Posterior cingulate gyrus (tissue), 11 donors: ENCODE measurements at regions of chr15 and their contacts with region 1.

Region 1: DNA sequence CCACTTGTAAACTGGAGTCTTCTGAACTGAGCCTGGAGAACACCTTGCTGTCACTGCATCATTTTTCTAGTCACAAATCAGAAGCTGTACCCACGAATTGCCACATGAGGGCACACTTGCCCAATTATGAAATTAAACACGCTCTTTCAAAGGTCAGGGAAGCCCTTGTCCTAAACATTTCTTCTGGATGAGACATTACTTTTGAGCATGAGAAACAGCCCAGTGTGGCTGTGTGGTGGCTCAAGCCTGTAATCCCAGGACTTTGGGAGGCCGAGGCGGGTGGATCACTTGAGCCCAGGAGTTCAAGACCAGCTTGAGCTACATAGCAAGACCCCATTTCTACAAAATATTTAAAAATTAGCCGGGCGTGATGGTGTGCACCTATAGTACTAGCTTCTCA is 27.5 kb upstream of the CFAP161 start:
- DNase-seq: peak in 4 of 10 donors; percentile 43 to 56 (median 50)

Region 2: GRCh38 chr15:80977627-80978036 is 128.9 kb before region 1 on chr15:
- intact Hi-C with region 1: loop called (anchors 5 kb)
- DNase-seq: peak in 8 of 10 donors; percentile 26 to 95 (median 72)

Region 3: GRCh38 chr15:80996247-80996646 is 110.3 kb before region 1 on chr15:
- intact Hi-C with region 1: loop called (anchors 5 kb)
- DNase-seq: no peak

Region 4: DNA sequence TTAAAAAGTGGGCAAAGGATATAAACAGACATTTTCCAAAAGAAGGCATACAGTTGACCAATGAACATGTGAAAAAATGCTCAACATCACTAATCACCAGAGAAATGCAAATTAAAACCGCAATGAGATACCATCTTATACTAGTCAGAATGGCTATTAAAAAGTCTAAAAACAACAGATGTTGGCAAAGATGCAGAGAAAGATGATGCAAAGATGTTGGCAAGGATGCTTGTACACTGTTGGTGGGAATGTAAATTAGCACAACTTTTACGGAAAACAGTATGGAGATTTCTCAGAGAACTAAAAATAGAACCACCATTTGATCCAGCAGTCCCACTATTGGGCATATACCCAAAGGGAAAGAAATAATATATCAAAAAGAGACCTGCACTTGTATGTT is 52.3 kb before region 1 on chr15:
- intact Hi-C with region 1: no loop called
- DNase-seq: no peak

Region 5: GRCh38 chr15:81146006-81146405 is 39.4 kb after region 1 on chr15:
- intact Hi-C with region 1: loop called (anchors 5 kb)
- DNase-seq: no peak

Region 6: DNA sequence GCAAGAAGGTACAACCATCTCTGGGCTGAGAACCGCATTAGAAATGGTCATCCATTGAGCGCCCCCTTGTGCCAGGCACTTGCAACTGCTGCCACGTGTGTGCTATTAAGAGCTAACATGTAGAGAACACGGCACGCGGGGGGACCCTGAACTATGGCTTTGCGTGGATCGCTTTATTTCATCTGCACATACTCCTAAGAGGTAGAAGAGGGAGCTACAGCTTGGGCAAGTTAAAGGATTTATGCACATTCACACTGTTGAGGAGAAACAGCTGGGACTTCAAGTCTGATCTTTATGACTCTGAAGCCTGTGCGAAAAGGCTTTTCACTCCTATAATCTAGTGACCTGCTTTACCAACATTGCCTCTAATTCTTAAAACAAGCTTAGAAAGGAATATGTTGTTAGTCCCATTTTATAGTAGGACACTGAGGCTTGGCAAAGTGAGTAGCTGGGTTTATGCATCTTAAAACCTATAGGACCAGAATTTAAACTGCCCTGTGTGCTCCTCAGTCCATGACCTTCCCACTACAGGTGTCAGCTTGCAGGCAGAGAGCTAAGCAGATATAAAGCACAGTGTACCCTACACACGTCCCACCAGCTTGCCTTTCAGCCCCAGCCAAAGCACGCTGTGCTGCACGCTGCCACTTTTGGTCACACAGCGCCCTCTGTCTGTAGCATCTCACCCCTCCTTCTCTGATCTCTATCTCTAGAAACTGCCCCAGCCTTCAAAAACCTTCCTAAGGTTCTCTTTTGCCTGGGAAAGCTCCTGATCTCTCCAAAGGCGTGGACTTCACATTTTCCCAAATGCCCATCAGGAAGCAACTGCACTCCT is 159.6 kb after region 1 on chr15:
- intact Hi-C with region 1: loop called (anchors 1 kb)
- DNase-seq: peak; percentile 59 to 96 (median 86)

Region 7: DNA sequence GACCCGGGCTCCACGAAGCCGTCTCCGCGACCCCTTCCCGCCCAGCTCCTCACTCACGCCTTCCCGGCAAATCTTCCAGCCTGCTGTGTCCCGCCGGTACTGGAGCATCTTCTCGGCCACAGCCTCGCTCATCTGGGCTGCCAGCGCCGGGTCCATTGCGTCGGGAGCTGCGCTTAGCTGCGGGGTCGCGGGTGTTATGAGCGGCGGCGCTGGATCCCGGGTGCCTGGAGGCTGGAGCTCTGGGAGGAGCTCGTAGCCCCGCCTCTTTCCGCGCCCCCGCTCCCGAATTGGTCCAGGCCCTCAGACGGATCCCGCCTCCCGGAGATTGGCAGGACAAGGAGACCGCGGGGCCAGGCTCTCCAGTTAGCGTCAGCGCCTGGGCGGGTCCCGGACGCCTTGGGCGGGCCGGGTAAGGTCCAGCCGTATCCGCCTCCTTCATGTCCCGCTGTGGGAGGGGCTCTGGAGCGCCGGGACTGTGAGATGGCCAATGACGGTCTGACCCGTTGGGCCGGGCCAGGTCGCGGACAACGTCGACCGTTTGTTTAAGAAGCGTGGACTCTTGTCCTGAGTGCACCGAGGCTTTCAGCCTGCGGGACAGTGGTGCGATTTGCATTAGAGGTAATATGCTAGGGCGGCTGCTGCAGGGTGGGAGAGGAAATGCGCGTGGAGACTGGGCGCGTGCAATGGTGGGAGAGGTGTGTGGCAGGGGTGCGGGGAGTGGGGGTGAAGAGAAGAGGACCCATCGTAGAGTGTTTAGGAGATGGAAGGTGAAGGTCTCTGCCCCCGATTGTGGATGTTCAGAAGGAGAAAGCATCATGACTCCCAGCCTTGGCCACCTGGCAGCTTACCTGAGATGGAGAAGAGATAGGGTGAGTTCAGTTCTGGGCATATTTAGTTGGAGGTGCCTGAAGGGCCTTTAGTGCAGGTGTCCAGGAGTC is 217.7 kb after region 1 on chr15 and contains the start of gene STARD5:
- intact Hi-C with region 1: no loop called
- DNase-seq: peak; percentile 96 to 100 (median 99)

Region 8: GRCh38 chr15:81480645-81481053 is 374.1 kb after region 1 on chr15:
- intact Hi-C with region 1: no loop called
- DNase-seq: peak in 1 of 10 donors; percentile 11